AG04449 (cell line): ENCODE measurements at regions of chr17 and their contacts with region 1.

Region 1: GRCh38 chr17:35119368-35120165 is at the start of gene RAD51D:
- DNase-seq: no peak
- H3K4me3 ChIP-seq: peak within 1 kb of the TSS; percentile 83
- CTCF ChIP-seq: peak; percentile 92

Region 2: DNA sequence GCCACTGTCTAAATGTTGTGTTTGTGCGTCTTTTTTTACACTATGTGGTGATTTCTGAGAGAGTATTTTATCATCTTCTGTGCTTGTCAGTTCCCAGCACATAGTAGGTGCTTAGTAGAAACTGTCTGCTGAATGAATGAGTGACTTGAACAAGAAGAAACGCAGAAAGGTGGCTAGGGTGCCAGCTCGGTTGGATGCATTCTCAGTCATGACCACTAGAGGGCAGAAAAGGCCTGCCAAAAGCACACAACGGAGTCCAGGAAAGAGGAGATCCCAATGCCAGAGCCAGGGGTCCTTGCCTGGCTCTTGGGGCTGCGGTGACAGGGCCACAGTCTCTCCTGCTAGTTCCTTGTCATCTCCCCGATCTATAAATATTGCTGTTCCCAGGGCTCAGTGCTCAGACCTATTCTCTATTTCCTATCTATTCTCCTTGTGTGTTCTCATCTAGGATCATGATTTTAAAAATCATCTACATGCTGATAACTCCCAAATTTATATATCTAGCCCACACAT is 699.3 kb before region 1 on chr17:
- CTCF ChIA-PET with region 1: interaction called, 18 read pairs
- POLR2A ChIA-PET with region 1: no interaction called
- DNase-seq: no peak
- H3K4me3 ChIP-seq: no peak overlapping the region
- CTCF ChIP-seq: peak; percentile 85

Region 3: DNA sequence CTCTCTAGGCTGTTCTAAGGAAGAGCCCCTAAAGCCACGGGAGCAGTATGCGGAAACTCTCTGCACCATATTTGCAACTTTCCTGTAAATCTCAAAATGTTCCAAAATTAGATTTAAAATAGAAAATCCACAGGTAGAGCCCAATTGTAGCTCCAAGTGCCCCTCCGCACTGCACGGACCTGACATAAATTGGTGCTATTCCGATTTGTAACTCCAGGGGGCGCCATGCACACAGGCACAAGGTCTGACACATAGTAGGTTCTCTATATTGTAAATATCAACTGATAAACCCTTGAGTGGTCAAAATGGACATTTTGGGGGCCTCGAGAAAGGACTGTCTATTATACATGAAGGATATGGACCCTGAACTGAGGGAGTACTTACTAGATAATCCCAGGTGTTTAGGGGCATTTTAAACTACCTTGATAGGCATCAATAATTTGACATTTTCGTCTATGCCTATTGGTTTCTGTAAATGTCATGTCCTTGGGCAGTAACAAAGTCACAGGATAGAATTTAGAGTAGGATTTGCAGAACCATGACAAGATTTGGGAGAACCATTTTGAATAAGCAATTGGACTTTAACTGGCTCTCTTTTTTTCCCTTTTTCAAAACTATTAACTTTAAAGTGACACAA is 576.7 kb before region 1 on chr17:
- CTCF ChIA-PET with region 1: interaction called, 63 read pairs
- POLR2A ChIA-PET with region 1: no interaction called
- DNase-seq: no peak
- H3K4me3 ChIP-seq: no peak overlapping the region
- CTCF ChIP-seq: peak; percentile 67

Region 4: DNA sequence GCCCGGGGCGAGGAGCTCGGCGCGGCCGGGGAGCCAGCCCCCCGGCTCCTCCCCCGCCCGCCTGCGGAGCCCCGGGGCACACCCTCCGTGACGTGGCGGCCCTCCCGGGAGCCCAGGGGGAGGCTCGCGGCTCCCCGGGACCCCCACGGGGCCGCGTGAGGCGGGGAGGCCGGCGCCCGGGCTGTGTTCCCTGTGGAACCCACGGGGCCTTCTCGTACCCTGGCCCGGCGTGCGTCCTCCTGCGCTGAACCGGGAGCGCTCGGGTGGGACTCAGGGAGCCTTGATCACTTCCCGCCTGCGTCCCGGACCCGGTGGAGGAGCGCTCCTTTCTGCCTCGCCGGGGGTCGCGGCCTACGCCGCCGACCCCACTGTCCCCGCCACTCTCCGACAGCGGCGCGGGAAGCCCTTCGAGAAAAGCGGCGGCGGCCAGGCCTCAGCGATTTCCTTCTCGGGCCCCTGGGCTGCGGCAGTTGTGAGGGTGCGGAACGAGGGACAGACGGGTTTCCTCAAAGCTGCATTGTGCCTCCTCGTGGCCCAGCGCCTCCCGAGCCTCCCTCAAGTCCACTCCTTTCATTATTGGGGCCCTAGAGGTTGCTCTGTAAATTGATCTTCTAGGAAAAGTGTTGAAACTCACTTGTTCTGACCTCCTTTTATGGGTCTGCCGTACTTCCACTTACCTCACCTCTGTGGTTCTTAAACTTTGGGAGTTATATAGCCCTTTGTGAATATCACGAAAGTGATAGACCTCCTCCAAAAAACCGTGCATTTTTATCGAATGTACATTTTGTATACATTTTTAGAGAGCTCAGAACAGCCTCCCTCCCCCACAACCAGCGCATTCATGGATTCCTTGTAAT is 138.7 kb before region 1 on chr17:
- CTCF ChIA-PET with region 1: interaction called, 18 read pairs
- POLR2A ChIA-PET with region 1: interaction called, 3 read pairs
- DNase-seq: no peak
- H3K4me3 ChIP-seq: peak overlapping the region; percentile 76
- CTCF ChIP-seq: peak; percentile 70

Region 5: GRCh38 chr17:34998205-34998604 is 121.4 kb before region 1 on chr17:
- CTCF ChIA-PET with region 1: interaction called, 142 read pairs
- POLR2A ChIA-PET with region 1: no interaction called
- DNase-seq: no peak
- H3K4me3 ChIP-seq: no peak overlapping the region
- CTCF ChIP-seq: peak; percentile 96

Region 6: GRCh38 chr17:35094902-35095301 is 24.7 kb before region 1 on chr17:
- CTCF ChIA-PET with region 1: interaction called, 30 read pairs
- POLR2A ChIA-PET with region 1: interaction called, 3 read pairs
- DNase-seq: peak; percentile 47
- H3K4me3 ChIP-seq: no peak overlapping the region
- CTCF ChIP-seq: no peak